Caco-2 (cell line): ENCODE measurements at regions of chr1 and their contacts with region 1.

Region 1: GRCh38 chr1:156368889-156369684 is at the start of gene RHBG:
- DNase-seq: peak; percentile 67 to 74
- H3K4me3 ChIP-seq: peak within 1 kb of the TSS; percentile 51
- H3K4me3 Mint-ChIP-seq: peak within 1 kb of the TSS; percentile 75
- H3K27ac Mint-ChIP-seq: peak within 1 kb of the TSS; percentile 72
- H3K4me1 ChIP-seq: peaks cover 65% of the 10 kb centered on the region
- H3K4me1 Mint-ChIP-seq: peaks cover 23% of the 10 kb centered on the region
- H3K27me3 ChIP-seq: no peaks in the 10 kb centered on the region
- H3K27me3 Mint-ChIP-seq: no peaks in the 10 kb centered on the region
- CTCF ChIP-seq: no peak
- total RNA-seq, gene RHBG: 4.6 and 6.5 TPM in 2 replicates

Region 2: DNA sequence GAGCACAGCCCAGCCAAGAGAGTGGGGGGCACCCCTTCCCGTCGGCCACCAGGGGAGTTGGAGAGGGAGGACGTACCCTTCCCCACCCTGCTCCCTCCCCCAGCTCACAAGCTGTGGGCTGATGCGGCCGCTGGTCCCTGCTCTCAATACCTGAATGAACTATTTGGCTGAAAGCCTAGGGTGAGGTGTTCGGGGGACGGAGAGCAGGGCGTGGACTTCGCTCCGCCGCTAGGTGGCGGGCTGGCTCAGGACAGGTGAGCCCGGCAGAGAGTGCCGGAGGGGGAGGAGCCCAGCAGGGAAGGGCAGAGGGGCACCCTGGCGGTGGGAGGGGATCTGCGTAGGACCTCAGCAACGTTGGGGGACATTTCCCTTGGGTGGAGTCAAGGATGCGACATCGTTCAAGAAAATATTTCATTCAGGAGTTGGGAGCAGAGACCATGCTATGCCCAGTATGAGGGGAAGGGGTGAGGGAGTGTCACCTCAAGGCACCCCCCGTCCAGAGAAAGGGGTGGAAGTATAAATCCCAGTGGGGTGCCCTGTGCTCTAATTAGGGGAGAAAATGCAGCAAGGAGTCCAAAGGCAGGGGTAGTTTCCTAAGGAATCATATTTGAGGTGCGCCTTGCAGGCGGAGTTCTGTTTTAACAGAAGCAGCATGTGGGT is 12.1 kb before region 1 on chr1:
- CTCF ChIA-PET with region 1: interaction called, 5 read pairs
- POLR2A ChIA-PET with region 1: no interaction called
- intact Hi-C with region 1: loop called (anchors 1 kb)
- DNase-seq: peak; percentile 87 to 90
- H3K4me3 ChIP-seq: peak overlapping the region; percentile 19
- H3K4me3 Mint-ChIP-seq: peak overlapping the region; percentile 67
- H3K27ac Mint-ChIP-seq: peak overlapping the region; percentile 60
- H3K4me1 ChIP-seq: 0 out of 2 replicates have a peak, but pooled peaks cover 3% of the 10 kb centered on the region
- H3K4me1 Mint-ChIP-seq: peaks cover 9% of the 10 kb centered on the region
- H3K27me3 ChIP-seq: no peaks in the 10 kb centered on the region
- H3K27me3 Mint-ChIP-seq: no peaks in the 10 kb centered on the region
- CTCF ChIP-seq: peak; percentile 93 to 99

Region 3: GRCh38 chr1:156421062-156421938 is 52.2 kb after region 1 on chr1:
- CTCF ChIA-PET with region 1: no interaction called
- POLR2A ChIA-PET with region 1: interaction called, 3 read pairs
- intact Hi-C with region 1: loop called (anchors 2 kb)
- DNase-seq: peak; percentile 91 to 93
- H3K4me3 ChIP-seq: peak overlapping the region; percentile 47
- H3K4me3 Mint-ChIP-seq: peak overlapping the region; percentile 80
- H3K27ac Mint-ChIP-seq: peak overlapping the region; percentile 76
- H3K4me1 ChIP-seq: peaks cover 41% of the 10 kb centered on the region
- H3K4me1 Mint-ChIP-seq: peaks cover 16% of the 10 kb centered on the region
- H3K27me3 ChIP-seq: no peaks in the 10 kb centered on the region; the same call in 1 of the 2 replicates
- H3K27me3 Mint-ChIP-seq: peaks cover 11% of the 10 kb centered on the region
- CTCF ChIP-seq: no peak